ENCODE measurements at regions of chrX and their contacts with region 1.

Region 1: DNA sequence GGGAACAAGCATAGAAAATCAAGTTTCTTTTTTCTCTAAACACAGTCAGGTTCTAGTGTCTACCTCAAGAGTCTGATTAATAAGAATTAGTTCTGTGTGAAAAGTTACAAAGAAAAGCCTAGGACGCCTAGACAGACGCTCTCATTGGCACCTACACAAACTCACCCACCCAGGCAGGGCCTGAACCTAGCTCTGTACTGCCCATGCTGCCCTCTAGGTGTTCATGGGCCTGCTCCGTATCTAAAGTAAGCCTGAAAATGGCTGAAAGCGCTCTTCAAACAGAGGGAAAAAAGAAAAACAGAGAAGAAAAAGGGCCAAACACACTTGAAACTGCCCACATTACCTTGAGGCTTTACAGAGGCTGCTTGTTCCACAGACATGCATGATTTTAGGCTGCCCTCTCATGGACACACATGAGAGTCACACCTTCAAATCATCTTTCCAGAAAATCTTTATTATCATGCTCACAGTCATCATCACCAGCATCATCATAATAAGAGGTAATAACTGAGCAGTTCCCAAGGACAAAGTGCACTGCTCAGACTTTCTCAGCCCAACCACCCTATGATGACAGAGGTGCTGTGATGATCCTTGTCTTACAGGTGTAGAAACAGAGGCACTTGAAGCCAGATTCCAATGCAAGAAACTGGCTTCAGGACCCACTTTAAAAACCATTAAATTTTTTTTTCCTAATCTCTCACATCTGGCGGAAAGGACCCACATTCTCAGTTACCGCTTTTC is 49.6 kb downstream of the MAP7D2 start:
- DNase-seq: no peak
- ATAC-seq: peak; percentile 79
- H3K4me3 ChIP-seq: no peak overlapping the region
- H3K27ac ChIP-seq: no peak overlapping the region
- H3K4me1 ChIP-seq: no peaks in the 10 kb centered on the region
- H3K27me3 ChIP-seq: peaks cover 0 to 2% of the 10 kb centered on the region in 2 experiments; a peak in 1 of 4 replicates
- CTCF ChIP-seq: peak; percentile 56 to 83 (median 67); a peak in 5 of 6 replicates
- EP300 ChIP-seq: no peak
- POLR2A ChIP-seq: no peak
- RAD21 ChIP-seq: peak; percentile 81

Region 2: DNA sequence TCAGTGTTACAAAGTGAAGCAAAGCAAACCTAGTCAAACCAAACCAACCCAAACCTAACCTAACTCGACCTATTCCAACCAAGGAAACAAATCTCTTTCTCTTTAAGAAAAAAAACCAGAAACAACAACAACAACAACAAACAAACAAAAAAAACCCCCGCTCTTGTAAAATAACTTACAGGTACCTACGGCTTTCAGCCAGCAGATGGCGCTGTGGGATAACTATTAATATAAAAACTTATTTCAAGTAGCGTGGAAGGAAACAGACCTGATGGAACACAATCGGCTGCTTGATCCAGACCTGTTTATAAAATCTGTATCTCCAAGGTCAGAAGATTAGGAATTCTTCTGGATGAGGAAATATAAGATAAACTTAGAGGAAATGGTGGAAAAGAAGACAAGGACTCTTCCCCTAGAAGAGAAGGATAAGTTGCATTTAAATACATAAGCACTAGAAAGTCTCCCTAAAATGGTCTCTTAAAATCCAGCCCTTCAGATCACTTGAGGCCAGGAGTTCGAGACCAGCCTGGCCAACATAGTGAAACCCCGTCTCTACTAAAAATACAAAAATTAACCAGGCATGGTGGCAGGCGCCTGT is 1676.1 kb before region 1 on chrX:
- CTCF ChIA-PET with region 1: no interaction called
- POLR2A ChIA-PET with region 1: no interaction called
- RAD21 ChIA-PET with region 1: no interaction called
- SMC1A ChIA-PET with region 1: no interaction called
- in situ Hi-C with region 1: loop called (anchors 25 kb)
- intact Hi-C with region 1: no loop called
- DNase-seq: peak; percentile 13
- ATAC-seq: peak; percentile 67
- H3K4me3 ChIP-seq: no peak overlapping the region
- H3K27ac ChIP-seq: no peak overlapping the region
- H3K4me1 ChIP-seq: no peaks in the 10 kb centered on the region
- H3K27me3 ChIP-seq: no peaks in the 10 kb centered on the region
- CTCF ChIP-seq: peak; percentile 35 to 73 (median 68); a peak in 5 of 6 replicates
- EP300 ChIP-seq: no peak
- POLR2A ChIP-seq: no peak
- RAD21 ChIP-seq: peak; percentile 92

Region 3: DNA sequence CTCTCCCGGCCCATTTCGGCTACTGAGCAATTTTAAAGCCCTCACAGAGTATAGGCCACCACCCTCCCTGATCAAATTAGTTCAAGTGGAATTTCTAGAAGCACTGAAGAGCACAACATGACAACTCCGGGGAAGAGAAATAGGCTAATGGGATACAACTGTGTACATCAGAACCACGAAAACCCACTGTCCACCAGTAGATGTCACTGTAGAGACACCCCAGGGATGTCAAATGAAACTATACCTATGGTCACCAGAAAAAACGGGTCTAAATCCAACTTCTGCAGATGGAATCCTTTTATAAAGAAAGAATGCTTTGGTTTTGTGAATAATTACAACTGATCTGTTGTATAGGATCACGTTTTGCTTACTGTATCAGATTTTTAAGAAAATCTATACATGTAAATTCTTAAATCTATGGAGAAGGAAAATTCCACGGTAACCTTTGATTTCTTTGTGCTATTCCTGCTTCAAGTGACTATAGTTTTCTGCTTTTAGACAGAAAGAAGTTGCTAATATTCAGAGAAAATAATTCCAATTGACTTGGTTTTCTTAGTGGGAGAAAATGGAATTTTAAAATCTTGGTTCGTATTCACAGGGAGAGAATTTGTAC is 522.3 kb before region 1 on chrX:
- CTCF ChIA-PET with region 1: no interaction called
- POLR2A ChIA-PET with region 1: no interaction called
- RAD21 ChIA-PET with region 1: no interaction called
- SMC1A ChIA-PET with region 1: no interaction called
- in situ Hi-C with region 1: no loop called
- intact Hi-C with region 1: loop called (anchors 5 kb)
- DNase-seq: no peak
- ATAC-seq: peak; percentile 87
- H3K4me3 ChIP-seq: no peak overlapping the region
- H3K27ac ChIP-seq: no peak overlapping the region
- H3K4me1 ChIP-seq: no peaks in the 10 kb centered on the region
- H3K27me3 ChIP-seq: no peaks in the 10 kb centered on the region
- CTCF ChIP-seq: peak; percentile 75 to 77 (median 76)
- EP300 ChIP-seq: no peak
- POLR2A ChIP-seq: no peak
- RAD21 ChIP-seq: peak; percentile 76

Region 4: DNA sequence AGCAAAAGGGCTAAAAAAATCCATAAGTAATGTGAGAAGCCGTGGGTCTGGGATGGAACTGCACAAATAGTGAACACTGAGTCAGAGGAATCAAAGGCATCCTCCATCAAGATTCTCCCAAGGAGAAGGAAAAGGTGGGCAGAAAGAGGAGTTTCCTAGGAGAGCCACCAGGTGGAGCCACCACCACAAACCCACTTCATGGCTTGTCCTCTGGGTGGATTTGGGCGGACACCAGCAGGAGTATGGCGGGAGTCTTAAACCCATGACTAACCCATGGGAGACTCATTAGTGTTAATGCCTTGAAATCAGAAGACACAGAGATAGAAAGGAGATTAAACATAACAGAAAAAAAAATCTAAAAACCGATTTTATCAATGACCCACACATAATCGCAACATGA is 327.5 kb before region 1 on chrX:
- CTCF ChIA-PET with region 1: interaction called, 4 read pairs
- POLR2A ChIA-PET with region 1: no interaction called
- RAD21 ChIA-PET with region 1: no interaction called
- SMC1A ChIA-PET with region 1: interaction called, 3 read pairs
- in situ Hi-C with region 1: no loop called
- intact Hi-C with region 1: loop called (anchors 2 kb)
- DNase-seq: no peak
- ATAC-seq: peak; percentile 18; the same call in 2 of the 3 replicates
- H3K4me3 ChIP-seq: no peak overlapping the region
- H3K27ac ChIP-seq: no peak overlapping the region
- H3K4me1 ChIP-seq: peaks cover 28% of the 10 kb centered on the region
- H3K27me3 ChIP-seq: no peaks in the 10 kb centered on the region
- CTCF ChIP-seq: peak; percentile 56 to 72 (median 71)
- EP300 ChIP-seq: no peak
- POLR2A ChIP-seq: no peak
- RAD21 ChIP-seq: peak; percentile 73

Region 5: DNA sequence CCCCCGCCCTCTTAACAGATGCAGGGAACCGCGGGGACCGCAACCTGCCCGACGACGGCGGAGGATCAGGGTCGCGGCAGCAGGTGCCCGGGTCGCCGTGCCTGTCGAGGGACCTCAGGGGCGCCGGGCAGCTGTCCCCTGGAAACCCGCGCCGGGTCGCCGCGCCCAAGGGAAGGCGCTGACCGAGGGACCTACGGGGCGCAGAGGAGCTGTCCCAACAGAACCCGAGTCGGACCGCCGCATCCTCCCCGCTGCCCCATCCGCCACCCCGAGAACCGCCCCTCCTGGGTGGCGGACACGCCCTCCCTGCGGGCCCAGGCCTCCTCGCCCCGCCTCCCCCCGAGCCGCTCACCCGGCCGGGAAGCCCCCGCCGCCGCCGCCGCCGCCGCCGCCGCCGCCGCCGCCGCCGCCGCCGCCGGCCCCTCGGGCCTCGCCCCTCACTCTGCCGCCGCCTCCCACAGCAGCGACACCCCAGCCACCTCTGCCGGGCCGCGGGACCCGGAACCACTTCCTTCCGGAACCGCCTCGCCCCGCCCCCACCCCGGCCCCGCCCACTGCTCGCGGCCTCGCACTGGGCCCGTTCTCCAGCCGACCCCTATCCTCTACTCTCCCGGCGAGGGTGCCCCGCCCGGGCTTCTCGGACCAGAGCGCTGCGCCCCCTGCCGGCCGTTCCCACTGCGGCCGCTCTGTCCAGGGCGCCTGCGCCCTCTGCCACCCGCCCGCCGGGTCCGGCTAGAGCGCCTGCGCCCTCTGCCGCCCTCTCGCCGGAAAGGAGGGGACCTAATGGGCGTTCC is 76.4 kb before region 1 on chrX and contains the start of gene BCLAF3:
- CTCF ChIA-PET with region 1: interaction called, 19 read pairs
- POLR2A ChIA-PET with region 1: no interaction called
- RAD21 ChIA-PET with region 1: interaction called, 5 read pairs
- SMC1A ChIA-PET with region 1: interaction called, 6 read pairs
- in situ Hi-C with region 1: no loop called
- intact Hi-C with region 1: loop called (anchors 5 kb)
- DNase-seq: peak; percentile 30
- ATAC-seq: peak; percentile 94
- H3K4me3 ChIP-seq: peak within 1 kb of the TSS; percentile 67
- H3K27ac ChIP-seq: no peak within 1 kb of the TSS
- H3K4me1 ChIP-seq: no peaks in the 10 kb centered on the region
- H3K27me3 ChIP-seq: no peaks in the 10 kb centered on the region
- CTCF ChIP-seq: peak; percentile 64 to 82 (median 65); a peak in 5 of 6 replicates
- EP300 ChIP-seq: no peak
- POLR2A ChIP-seq: peak; percentile 56; the same call in 1 of the 2 replicates
- RAD21 ChIP-seq: peak; percentile 73
- polyA plus RNA-seq, gene BCLAF3: 1.1 to 1.5 TPM